Activated naive CD4-positive, alpha-beta T cell treated with anti-CD3 and anti-CD28 coated beads, Interleukin-2, amount 10 ng/mL, durations not matched to agents 7 days and 5 days (primary cell): ENCODE measurements at regions of chr10 and their contacts with region 1.

Region 1: GRCh38 chr10:102072673-102073527 is 7.8 kb downstream of the HPS6 start:
- DNase-seq: peak; percentile 89
- H3K4me3 Mint-ChIP-seq: no peak overlapping the region
- H3K27ac Mint-ChIP-seq: no peak overlapping the region
- H3K4me1 Mint-ChIP-seq: no peaks in the 10 kb centered on the region
- H3K27me3 Mint-ChIP-seq: peaks cover 3% of the 10 kb centered on the region

Region 2: GRCh38 chr10:101830322-101831168 is 242.4 kb before region 1 on chr10:
- CTCF ChIA-PET with region 1: interaction called, 18 read pairs
- DNase-seq: peak; percentile 95
- H3K4me3 Mint-ChIP-seq: peak overlapping the region; percentile 74
- H3K27ac Mint-ChIP-seq: peak overlapping the region; percentile 96
- H3K4me1 Mint-ChIP-seq: peaks cover 62% of the 10 kb centered on the region
- H3K27me3 Mint-ChIP-seq: peaks cover 4% of the 10 kb centered on the region

Region 3: DNA sequence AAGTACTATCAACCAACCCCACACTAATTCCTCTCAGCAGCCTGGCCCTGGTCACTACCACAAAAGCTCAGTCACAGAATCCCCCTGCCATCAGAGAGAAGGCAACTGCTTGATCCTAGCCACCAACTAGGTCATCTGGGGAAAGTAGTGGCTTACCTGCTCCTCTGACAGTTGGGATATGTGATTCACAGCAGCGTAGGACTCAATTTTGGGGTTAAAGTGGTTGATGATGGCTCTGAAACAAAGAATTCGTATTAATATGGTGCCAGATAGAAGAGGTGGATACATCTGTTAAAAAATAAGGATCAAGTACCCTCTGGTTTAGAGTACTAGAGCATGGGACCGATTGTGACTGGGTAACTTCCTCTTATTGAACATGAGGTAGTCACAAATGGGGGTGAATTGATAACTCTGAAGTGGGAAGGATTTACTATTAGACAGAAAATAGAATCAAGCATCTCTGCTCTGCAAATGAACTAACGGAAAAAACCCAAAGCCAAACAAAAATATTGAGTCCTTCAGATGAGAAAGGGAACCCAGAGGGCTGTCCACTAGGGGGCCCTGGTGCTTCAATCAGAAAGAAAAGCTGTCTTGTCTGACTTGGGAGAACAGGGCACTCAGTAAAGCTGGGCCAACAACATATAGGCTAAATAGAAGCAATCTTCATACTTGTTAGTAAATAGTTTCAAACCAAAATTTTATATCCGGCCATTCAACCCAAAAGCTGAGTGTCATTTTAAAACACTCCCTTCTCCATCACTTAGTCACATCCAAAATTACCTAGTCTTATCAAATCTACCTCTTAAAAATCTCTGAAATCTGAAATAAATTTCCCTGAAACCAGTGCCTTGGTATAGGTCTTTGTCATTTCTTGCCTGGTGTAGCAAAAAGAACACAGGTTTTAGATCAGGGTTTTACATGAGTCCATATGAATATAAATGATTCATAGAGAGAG is 183.4 kb before region 1 on chr10:
- CTCF ChIA-PET with region 1: interaction called, 22 read pairs
- DNase-seq: peak; percentile 85
- H3K4me3 Mint-ChIP-seq: no peak overlapping the region
- H3K27ac Mint-ChIP-seq: no peak overlapping the region
- H3K4me1 Mint-ChIP-seq: no peaks in the 10 kb centered on the region
- H3K27me3 Mint-ChIP-seq: no peaks in the 10 kb centered on the region

Region 4: GRCh38 chr10:101932183-101932582 is 140.7 kb before region 1 on chr10:
- CTCF ChIA-PET with region 1: no interaction called
- DNase-seq: no peak
- H3K4me3 Mint-ChIP-seq: no peak overlapping the region
- H3K27ac Mint-ChIP-seq: no peak overlapping the region
- H3K4me1 Mint-ChIP-seq: no peaks in the 10 kb centered on the region
- H3K27me3 Mint-ChIP-seq: no peaks in the 10 kb centered on the region

Region 5: DNA sequence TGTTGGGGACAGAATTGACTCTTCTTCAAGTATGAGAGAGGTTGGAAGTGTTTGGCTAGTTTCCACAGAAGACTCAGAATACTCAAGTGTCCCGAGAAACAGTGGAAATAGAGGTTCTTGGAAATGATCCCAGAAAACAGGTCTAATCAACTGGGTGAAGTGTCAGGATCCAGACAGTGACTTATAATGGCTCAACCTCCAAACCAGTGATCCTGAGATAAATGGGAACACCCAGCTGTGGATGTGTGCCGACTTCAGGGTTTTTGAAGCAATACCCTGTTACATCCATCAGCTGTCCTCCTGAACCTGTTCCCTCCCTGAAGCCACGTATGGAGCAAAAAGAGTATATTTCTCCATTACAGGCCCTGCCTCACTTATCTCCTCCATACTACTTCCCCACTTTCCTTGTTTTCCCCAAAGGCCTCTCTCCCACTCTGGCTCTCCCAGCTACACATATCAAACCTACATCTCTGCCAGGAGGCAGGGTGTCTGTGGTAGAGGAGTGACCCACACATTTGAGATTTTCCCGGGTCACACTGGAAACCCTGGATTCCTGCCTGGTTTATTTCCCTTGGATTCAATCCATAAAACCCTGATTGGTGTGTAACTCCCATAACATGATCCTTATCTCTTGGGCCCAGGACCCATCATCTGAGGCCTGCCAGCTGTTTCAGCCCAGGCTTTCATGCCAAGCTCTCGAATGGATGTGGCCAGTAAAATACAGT is 135.6 kb after region 1 on chr10:
- CTCF ChIA-PET with region 1: no interaction called
- DNase-seq: no peak
- H3K4me3 Mint-ChIP-seq: no peak overlapping the region
- H3K27ac Mint-ChIP-seq: no peak overlapping the region
- H3K4me1 Mint-ChIP-seq: no peaks in the 10 kb centered on the region
- H3K27me3 Mint-ChIP-seq: peaks cover 8% of the 10 kb centered on the region